ENCODE measurements at regions of chr2 and their contacts with region 1.

Region 1: DNA sequence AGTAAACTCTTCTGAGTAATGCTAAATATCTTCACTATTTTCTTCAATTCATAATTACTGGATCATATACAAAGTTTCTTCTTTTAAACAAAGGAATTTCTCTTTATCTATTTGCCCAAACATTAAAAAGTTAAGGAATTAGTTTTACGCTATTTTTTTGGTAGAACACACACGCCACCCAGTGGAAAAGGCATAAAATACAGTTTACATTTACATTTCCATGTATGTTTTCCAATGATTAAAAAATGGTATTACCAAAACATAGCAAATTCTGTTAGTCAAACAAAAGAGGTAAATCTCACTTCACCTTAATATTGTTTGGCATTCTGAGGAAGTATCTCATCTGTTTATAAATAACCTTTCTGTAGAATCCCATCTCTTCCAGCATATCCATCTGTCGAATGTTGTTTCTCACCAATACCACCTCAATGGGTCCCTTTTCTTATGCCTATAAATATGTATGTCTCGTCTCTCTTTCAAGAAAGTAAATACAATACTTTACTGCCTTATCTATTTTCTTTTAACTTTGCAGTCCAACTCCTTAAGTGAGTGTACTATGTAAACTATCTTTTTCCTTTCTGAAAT is 7.2 kb downstream of the BOLL start:
- DNase-seq: peak; percentile 58
- H3K4me3 ChIP-seq: no peak overlapping the region
- H3K27ac ChIP-seq: no peak overlapping the region
- H3K4me1 ChIP-seq: no peaks in the 10 kb centered on the region
- H3K27me3 ChIP-seq: no peaks in the 10 kb centered on the region
- CTCF ChIP-seq: peak; percentile 28 to 32
- POLR2A ChIP-seq: no peak

Region 2: DNA sequence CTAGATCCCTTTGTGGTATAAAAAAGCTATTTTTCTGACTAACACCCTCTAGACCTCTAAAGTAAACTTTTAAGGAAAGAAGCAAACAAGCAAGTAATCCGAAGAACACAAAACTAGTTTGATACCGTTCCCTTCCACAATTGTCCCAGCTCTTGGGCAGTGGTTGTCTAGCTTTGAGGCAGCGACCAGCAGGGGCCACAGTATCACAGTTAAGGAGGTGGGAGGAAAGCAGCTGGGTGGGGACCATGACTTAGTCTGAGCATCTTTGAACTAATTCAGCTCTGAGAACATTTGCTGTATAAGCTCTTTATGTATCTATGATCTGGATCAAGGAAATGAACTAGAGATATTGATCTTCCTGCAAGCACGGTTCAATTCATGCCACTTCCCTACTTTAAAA is 394.1 kb before region 1 on chr2:
- CTCF ChIA-PET with region 1: interaction called, 16 read pairs
- POLR2A ChIA-PET with region 1: no interaction called
- dilution Hi-C with region 1: no loop called
- intact Hi-C with region 1: loop called (anchors 2 kb)
- DNase-seq: no peak
- H3K4me3 ChIP-seq: no peak overlapping the region
- H3K27ac ChIP-seq: no peak overlapping the region
- H3K4me1 ChIP-seq: no peaks in the 10 kb centered on the region
- H3K27me3 ChIP-seq: peaks cover 0 to 4% of the 10 kb centered on the region in 2 experiments
- CTCF ChIP-seq: no peak
- POLR2A ChIP-seq: no peak

Region 3: GRCh38 chr2:198073253-198073652 is 295.3 kb after region 1 on chr2:
- CTCF ChIA-PET with region 1: no interaction called
- POLR2A ChIA-PET with region 1: no interaction called
- dilution Hi-C with region 1: no loop called
- intact Hi-C with region 1: no loop called
- DNase-seq: no peak
- H3K4me3 ChIP-seq: no peak overlapping the region
- H3K27ac ChIP-seq: no peak overlapping the region
- H3K4me1 ChIP-seq: no peaks in the 10 kb centered on the region
- H3K27me3 ChIP-seq: no peaks in the 10 kb centered on the region
- CTCF ChIP-seq: no peak
- POLR2A ChIP-seq: no peak

Measured in endothelial cell of umbilical vein (primary cell).